PC-9 (cell line): ENCODE measurements at regions of chr10 and their contacts with region 1.

Region 1: DNA sequence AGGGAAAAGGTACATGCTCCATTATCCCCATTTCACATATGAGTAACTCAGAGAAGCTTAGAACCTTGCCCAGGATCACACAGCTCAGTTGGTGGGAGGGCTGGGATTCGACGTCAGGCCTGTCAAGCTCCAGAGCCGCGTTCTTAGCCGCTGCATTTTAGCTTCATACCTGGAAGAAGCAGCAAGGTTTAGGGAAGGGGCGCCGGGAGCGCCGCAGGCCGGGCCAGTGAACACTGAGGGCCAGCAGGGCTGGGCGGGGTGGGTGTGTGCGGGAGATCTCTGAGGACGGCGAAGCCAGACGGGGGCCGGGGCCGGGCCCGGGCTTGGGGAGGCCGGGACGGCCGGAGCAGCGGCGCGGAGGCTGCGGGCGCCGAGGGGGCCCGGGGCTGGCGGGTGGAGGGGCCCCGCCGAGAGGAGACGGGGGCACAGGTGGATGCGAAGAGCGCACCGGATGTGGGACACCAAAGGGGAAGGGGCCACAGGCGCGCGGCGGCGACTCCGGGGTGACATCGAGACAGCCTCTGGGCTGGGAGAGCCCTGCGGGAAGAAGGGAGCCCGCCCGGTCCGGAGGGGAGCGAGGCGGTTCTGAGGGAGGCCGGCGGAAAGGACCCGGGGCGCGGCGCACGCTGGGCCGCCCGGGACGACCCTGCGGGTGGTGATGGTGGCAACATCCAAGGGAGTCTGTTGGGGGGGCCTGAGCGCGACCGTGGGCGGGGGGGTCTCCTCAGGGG is 498 bp downstream of the NDST2 start:
- DNase-seq: peak in 1 of 2 experiments; percentile 37
- H3K4me3 ChIP-seq: peak overlapping the region; percentile 90
- H3K27ac ChIP-seq: 0 out of 2 replicates have a peak overlapping the region, but pooled peaks have one; percentile 38
- H3K4me1 ChIP-seq: peaks cover 9% of the 10 kb centered on the region; the same call in 1 of the 2 replicates
- H3K27me3 ChIP-seq: no peaks in the 10 kb centered on the region
- CTCF ChIP-seq: no peak

Region 2: DNA sequence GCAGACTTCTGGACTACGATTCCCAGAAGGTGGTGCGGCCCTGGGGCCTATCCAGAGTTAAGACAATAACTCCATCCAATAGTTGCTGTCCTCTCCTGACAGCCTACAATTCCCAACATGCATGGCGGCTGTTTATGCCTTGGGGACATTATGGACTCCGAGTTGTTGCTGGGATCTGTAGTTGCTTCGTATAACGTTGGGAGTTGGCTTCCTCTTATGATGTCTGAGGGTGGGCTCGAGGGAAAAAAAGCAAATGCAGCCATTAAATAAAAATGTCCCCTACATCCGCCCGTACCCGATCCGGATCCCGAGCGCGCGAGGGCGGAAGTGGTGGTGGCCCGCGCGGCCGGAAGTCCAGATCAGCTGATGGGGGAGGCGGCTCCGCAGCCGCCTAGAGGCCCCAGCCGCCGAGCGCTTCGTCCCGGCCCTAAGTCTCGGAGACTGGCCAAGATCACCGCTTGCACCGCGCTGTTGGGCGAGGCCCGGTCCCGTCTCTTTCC is 25.6 kb before region 1 on chr10 and contains the start of gene ZSWIM8:
- CTCF ChIA-PET with region 1: no interaction called
- POLR2A ChIA-PET with region 1: no interaction called
- intact Hi-C with region 1: loop called (anchors 1 kb)
- DNase-seq: peak; percentile 80 to 93
- H3K4me3 ChIP-seq: peak within 1 kb of the TSS; percentile 58
- H3K27ac ChIP-seq: 0 out of 2 replicates have a peak within 1 kb of the TSS, but pooled peaks have one; percentile 14
- H3K4me1 ChIP-seq: peaks cover 35% of the 10 kb centered on the region
- H3K27me3 ChIP-seq: no peaks in the 10 kb centered on the region
- CTCF ChIP-seq: no peak
- total RNA-seq, gene ZSWIM8: 49.2 and 70.0 TPM in 2 replicates

Region 3: DNA sequence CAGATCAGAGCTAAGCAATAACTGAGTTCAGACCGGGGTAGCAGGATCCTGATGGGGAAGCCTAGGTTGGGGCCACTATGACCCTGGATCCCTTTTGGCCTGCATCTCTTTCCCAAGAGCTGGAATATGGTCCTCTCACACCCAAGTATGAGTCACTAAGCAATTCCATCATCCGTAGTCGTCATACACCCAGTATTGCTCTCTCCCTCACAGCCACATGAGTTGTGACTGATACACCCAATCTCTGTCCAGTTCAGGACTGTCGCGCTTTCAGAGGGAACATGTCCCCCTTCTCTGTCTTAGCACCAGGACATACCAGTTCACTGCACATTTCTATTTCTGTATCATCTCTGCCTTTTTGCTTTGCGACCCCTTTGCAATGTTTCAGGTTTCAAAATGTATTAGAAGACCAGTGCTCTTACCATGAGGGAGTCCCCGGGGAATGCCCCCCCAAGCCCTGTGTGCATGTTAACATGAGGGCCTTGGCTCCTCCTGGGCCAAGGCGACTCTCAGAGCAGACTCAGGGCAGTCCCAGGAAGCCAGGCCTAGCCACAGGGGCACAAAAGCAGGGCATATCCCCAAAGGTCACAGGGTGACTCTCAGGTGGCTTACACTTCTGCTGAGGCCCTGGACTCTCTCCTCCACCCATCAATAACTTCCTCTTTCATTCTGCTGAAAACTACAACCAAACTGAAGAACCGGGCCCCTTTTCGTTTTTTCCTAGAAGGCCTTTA is 1225.2 kb after region 1 on chr10:
- CTCF ChIA-PET with region 1: no interaction called
- POLR2A ChIA-PET with region 1: interaction called, 25 read pairs
- intact Hi-C with region 1: no loop called
- DNase-seq: no peak
- H3K4me3 ChIP-seq: no peak overlapping the region
- H3K27ac ChIP-seq: no peak overlapping the region
- H3K4me1 ChIP-seq: no peaks in the 10 kb centered on the region
- H3K27me3 ChIP-seq: no peaks in the 10 kb centered on the region
- CTCF ChIP-seq: no peak